Activated B cell treated with CpG ODN at 0.5 μM for 24 hours (primary cell): ENCODE measurements at regions of chr22 and their contacts with region 1.

Region 1: DNA sequence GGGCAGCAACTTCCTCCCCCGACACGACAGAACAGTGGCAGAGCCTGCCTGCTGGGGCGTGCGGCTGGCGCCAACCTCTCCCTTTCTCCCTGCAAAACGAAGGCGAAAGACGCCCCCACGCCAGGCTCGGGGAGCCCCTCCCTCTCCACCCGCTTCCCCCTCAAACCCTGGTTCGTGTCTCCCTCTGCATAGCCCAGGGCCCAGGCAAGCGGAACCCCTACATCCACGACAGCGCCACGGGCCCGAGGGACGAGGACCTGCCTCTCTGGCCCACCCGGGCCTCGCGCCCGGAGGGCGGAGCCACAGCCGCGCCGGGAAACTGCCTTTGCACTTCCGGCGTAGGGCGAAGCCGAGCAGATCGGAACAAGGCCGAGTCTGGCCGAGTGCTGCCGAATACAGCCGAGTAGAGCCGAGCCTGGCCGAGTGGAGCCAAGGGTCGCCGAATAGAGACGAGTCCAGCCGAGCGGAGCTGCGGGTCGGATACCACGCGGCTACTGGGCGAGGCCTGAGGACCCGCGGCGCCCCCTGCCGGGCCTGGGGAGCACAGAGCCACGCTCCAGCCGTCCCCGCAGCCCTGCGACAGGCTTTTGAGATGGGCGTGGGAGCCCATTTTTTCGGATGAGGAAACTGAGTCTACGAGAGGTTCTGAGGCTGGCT is 11.2 kb upstream of the C1QTNF6 start:
- DNase-seq: peak; percentile 99
- ATAC-seq: peak; percentile 97
- H3K4me3 Mint-ChIP-seq: peak overlapping the region; percentile 87
- H3K27ac Mint-ChIP-seq: peak overlapping the region; percentile 94
- H3K4me1 Mint-ChIP-seq: peaks cover 28% of the 10 kb centered on the region
- H3K27me3 Mint-ChIP-seq: no peaks in the 10 kb centered on the region
- CTCF ChIP-seq: peak; percentile 22

Region 2: GRCh38 chr22:36546092-36546804 is 653.0 kb before region 1 on chr22:
- CTCF ChIA-PET with region 1: no interaction called
- POLR2A ChIA-PET with region 1: no interaction called
- intact Hi-C with region 1: loop called (anchors 10 kb)
- DNase-seq: no peak
- ATAC-seq: peak; percentile 82
- H3K4me3 Mint-ChIP-seq: no peak overlapping the region
- H3K27ac Mint-ChIP-seq: no peak overlapping the region
- H3K4me1 Mint-ChIP-seq: peaks cover 28% of the 10 kb centered on the region
- H3K27me3 Mint-ChIP-seq: no peaks in the 10 kb centered on the region
- CTCF ChIP-seq: no peak

Region 3: DNA sequence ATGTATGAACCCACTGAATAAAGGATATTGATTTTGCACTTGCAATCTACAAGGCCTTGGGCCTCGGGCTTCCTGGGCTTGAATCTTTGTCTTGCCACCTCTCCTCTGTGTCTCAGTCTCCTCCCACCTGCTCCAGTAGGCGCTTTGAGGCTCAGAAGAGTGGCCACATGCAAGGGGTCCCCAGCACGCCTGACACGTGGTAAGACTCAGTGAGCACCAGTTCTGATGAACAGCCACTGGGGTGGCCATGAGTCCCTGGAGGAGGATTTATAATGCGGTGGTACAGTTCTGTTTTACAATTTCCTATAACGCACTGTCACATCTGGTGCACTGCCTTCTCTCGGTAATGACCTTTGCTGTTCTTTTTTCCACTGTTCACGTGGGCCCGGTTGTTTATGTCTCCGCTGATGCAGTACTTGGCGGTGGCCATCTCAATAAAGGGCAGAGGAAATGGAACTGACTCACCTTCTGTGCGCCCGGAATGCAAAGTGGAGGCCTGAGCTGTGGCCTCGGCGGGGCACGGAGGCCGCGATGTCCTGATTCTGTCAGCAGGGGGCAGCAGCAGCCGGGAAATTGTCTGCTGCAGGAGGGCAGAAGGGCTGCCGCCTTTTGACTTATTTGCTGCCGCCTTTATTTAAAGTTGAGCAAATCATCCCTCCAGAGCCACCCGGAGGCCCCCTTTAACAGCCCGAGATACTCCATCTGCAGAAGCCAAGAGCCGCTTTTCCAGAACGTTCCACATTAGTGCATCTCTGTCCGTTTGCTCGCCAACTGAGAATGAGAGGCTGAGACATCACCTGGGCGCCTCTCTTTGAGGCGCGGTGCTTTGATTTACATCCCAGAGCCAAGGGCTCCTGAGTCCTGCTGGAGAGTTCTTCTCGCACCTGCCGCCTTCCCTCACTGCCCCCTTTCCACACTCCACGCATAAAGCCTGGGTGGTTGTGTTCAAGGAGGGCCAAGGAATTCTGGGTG is 417.3 kb before region 1 on chr22:
- CTCF ChIA-PET with region 1: interaction called, 4 read pairs
- POLR2A ChIA-PET with region 1: no interaction called
- intact Hi-C with region 1: loop called (anchors 1 kb)
- DNase-seq: peak; percentile 87
- ATAC-seq: peak; percentile 98
- H3K4me3 Mint-ChIP-seq: peak overlapping the region; percentile 41
- H3K27ac Mint-ChIP-seq: peak overlapping the region; percentile 77
- H3K4me1 Mint-ChIP-seq: peaks cover 14% of the 10 kb centered on the region
- H3K27me3 Mint-ChIP-seq: peaks cover 3% of the 10 kb centered on the region
- CTCF ChIP-seq: peak; percentile 97

Region 4: GRCh38 chr22:37051391-37052385 is 147.5 kb before region 1 on chr22 and contains the start of gene KCTD17:
- CTCF ChIA-PET with region 1: interaction called, 3 read pairs
- POLR2A ChIA-PET with region 1: no interaction called
- intact Hi-C with region 1: loop called (anchors 1 kb)
- DNase-seq: peak; percentile 76
- ATAC-seq: peak; percentile 100
- H3K4me3 Mint-ChIP-seq: peak within 1 kb of the TSS; percentile 80
- H3K27ac Mint-ChIP-seq: no peak within 1 kb of the TSS
- H3K4me1 Mint-ChIP-seq: peaks cover 18% of the 10 kb centered on the region
- H3K27me3 Mint-ChIP-seq: no peaks in the 10 kb centered on the region
- CTCF ChIP-seq: no peak
- total RNA-seq, gene KCTD17: 28.9 and 29.4 TPM in 2 replicates

Region 5: DNA sequence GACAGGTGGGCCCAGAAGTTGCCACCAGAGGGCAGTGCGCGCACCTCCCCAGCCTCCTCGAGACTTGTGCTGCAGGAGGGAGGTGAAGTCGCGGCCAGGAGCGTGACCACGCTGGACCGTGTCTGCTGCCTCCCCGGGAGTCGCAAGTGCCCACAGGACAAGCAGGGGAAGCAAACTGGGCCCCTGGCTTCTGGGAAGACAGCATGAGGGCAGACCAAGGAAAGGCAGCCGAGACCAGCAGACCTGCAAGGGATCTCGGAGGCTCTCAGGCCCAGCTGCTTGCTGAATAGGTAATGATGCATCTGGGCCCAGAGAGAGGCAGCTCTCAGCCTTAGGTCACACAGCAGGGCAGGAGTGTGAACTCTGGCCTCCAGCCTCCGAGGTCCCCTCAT is 32.6 kb before region 1 on chr22:
- CTCF ChIA-PET with region 1: interaction called, 16 read pairs
- POLR2A ChIA-PET with region 1: interaction called, 11 read pairs
- intact Hi-C with region 1: loop called (anchors 1 kb)
- DNase-seq: peak; percentile 73
- ATAC-seq: peak; percentile 44
- H3K4me3 Mint-ChIP-seq: peak overlapping the region; percentile 7
- H3K27ac Mint-ChIP-seq: peak overlapping the region; percentile 21
- H3K4me1 Mint-ChIP-seq: peaks cover 39% of the 10 kb centered on the region
- H3K27me3 Mint-ChIP-seq: no peaks in the 10 kb centered on the region
- CTCF ChIP-seq: peak; percentile 69

Region 6: DNA sequence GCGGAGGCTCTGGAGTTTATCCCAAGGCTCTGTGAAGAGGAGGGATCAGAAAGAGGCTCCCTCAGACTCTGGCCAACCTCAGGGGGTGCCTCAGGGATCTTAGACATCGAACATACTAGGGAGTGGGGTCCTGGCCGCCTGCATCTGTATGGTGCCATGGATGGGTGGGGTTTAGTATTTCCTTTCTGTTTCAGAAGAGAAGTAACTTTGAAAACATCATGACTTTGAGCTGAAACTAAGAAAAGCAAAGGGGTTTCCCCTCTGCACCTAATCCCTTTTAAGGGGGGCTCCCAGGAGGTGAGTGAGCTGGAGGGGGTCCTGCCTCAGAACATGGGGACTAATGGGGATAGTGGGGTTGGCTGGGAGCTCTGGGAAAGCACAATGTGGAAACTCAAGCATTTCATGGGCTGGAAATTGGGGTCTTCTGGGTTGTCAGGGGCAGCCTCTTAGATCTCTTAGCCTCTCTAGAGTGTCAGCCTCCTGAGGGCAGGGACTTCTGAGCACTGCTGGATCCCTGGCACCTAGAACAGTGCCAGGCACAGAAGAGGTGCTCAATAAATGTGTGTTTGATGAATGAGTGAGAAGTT is 24.8 kb after region 1 on chr22:
- CTCF ChIA-PET with region 1: interaction called, 17 read pairs
- POLR2A ChIA-PET with region 1: interaction called, 54 read pairs
- intact Hi-C with region 1: loop called (anchors 1 kb)
- DNase-seq: no peak
- ATAC-seq: peak; percentile 64
- H3K4me3 Mint-ChIP-seq: peak overlapping the region; percentile 73
- H3K27ac Mint-ChIP-seq: peak overlapping the region; percentile 99
- H3K4me1 Mint-ChIP-seq: peaks cover 92% of the 10 kb centered on the region
- H3K27me3 Mint-ChIP-seq: no peaks in the 10 kb centered on the region
- CTCF ChIP-seq: no peak

Region 7: DNA sequence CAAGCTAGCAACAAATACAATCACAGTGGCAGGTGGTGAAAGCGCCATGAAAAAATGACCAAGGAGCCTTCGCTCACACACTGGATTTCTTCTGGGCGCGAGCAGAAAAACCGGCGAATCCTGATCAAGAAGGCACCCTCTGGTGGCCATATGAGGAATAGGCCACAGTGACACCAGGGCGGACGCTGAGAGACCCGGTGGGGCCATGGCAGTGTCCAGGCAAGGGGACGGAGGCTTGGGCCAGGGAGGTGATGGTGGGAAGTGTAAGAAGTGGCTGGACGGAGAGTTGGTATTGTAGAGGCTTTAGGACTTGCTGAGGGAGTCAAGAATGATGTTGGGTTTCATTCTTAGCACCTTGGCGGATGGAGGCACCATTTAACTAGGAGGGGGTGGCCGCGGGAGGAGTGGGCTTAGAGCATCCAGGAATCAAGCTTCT is 61.7 kb after region 1 on chr22:
- CTCF ChIA-PET with region 1: interaction called, 64 read pairs
- POLR2A ChIA-PET with region 1: interaction called, 15 read pairs
- intact Hi-C with region 1: loop called (anchors 1 kb)
- DNase-seq: no peak
- ATAC-seq: peak; percentile 88
- H3K4me3 Mint-ChIP-seq: peak overlapping the region; percentile 2
- H3K27ac Mint-ChIP-seq: no peak overlapping the region
- H3K4me1 Mint-ChIP-seq: peaks cover 38% of the 10 kb centered on the region
- H3K27me3 Mint-ChIP-seq: no peaks in the 10 kb centered on the region
- CTCF ChIP-seq: peak; percentile 44